IMR-90 (cell line): ENCODE measurements at regions of chr19 and their contacts with region 1.

Region 1: GRCh38 chr19:11035441-11036377 is 53.6 kb upstream of the LDLR start:
- DNase-seq: peak; percentile 74
- ATAC-seq: peak; percentile 97
- H3K4me3 ChIP-seq: no peak overlapping the region
- H3K27ac ChIP-seq: no peak overlapping the region
- H3K4me1 ChIP-seq: no peaks in the 10 kb centered on the region
- H3K27me3 ChIP-seq: no peaks in the 10 kb centered on the region
- CTCF ChIP-seq: peak; percentile 77
- POLR2A ChIP-seq: no peak
- RAD21 ChIP-seq: peak; percentile 80

Region 2: DNA sequence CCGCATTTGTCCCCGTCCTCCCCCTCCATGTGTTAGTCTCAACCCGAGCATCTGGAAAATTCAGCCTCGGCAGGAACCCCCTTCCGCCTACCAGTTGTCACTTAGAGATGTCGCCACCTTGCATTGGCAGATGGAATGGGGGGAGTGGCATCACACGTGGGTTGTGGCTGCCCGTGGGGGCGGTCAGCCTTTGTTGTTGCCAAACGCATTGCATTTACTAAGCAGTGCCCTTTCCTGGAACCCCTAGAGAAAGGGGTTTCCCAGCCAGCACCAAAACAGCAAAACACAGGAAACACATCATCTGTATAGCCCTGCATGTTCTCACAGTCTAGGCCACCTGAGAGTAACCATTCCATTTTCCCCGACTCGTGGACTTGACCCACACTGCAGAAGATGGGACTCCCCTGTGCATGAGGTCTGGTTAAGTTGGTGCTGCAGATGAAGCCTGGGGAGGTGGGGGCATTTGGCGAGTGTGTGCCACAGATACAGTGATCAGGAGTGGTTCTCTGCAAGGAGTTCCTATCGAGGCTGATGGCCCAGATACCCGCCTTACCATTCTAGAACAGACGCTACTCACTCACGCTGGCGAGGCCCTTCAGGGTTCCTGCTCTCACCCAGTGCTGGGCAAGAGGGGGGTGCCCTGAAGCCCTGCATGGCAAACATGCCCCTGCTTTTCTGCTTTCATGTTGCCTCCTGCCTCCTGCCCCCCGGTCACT is 238.0 kb before region 1 on chr19:
- CTCF ChIA-PET with region 1: no interaction called
- POLR2A ChIA-PET with region 1: no interaction called
- dilution Hi-C with region 1: no loop called
- in situ Hi-C with region 1: no loop called
- intact Hi-C with region 1: no loop called
- DNase-seq: no peak
- ATAC-seq: no peak
- H3K4me3 ChIP-seq: no peak overlapping the region
- H3K27ac ChIP-seq: no peak overlapping the region
- H3K4me1 ChIP-seq: no peaks in the 10 kb centered on the region; the same call in 1 of the 2 replicates
- H3K27me3 ChIP-seq: no peaks in the 10 kb centered on the region
- CTCF ChIP-seq: no peak
- POLR2A ChIP-seq: no peak
- RAD21 ChIP-seq: no peak

Region 3: GRCh38 chr19:10998045-10998533 is 37.6 kb before region 1 on chr19:
- CTCF ChIA-PET with region 1: no interaction called
- POLR2A ChIA-PET with region 1: no interaction called
- dilution Hi-C with region 1: no loop called
- in situ Hi-C with region 1: no loop called
- intact Hi-C with region 1: no loop called
- DNase-seq: peak; percentile 29
- ATAC-seq: peak; percentile 57
- H3K4me3 ChIP-seq: no peak overlapping the region
- H3K27ac ChIP-seq: no peak overlapping the region
- H3K4me1 ChIP-seq: peaks cover 1% of the 10 kb centered on the region; the same call in 1 of the 2 replicates
- H3K27me3 ChIP-seq: no peaks in the 10 kb centered on the region
- CTCF ChIP-seq: no peak
- POLR2A ChIP-seq: no peak
- RAD21 ChIP-seq: no peak

Region 4: GRCh38 chr19:11089254-11090053 is 53.7 kb after region 1 on chr19 and contains the start of gene LDLR:
- CTCF ChIA-PET with region 1: interaction called, 4 read pairs
- POLR2A ChIA-PET with region 1: no interaction called
- dilution Hi-C with region 1: no loop called
- in situ Hi-C with region 1: no loop called
- intact Hi-C with region 1: loop called (anchors 1 kb)
- DNase-seq: peak; percentile 90
- ATAC-seq: peak; percentile 38
- H3K4me3 ChIP-seq: peak within 1 kb of the TSS; percentile 54
- H3K27ac ChIP-seq: peak within 1 kb of the TSS; percentile 78
- H3K4me1 ChIP-seq: peaks cover 8% of the 10 kb centered on the region
- H3K27me3 ChIP-seq: no peaks in the 10 kb centered on the region
- CTCF ChIP-seq: no peak
- POLR2A ChIP-seq: peak; percentile 96
- RAD21 ChIP-seq: no peak
- total RNA-seq, gene LDLR: 40.5 and 45.2 TPM in 2 replicates

Region 5: GRCh38 chr19:11125994-11126685 is 90.4 kb after region 1 on chr19:
- CTCF ChIA-PET with region 1: no interaction called
- POLR2A ChIA-PET with region 1: no interaction called
- dilution Hi-C with region 1: no loop called
- in situ Hi-C with region 1: loop called (anchors 5 kb)
- intact Hi-C with region 1: loop called (anchors 2 kb)
- DNase-seq: peak; percentile 64
- ATAC-seq: peak; percentile 40; the same call in 1 of the 2 replicates
- H3K4me3 ChIP-seq: no peak overlapping the region
- H3K27ac ChIP-seq: no peak overlapping the region
- H3K4me1 ChIP-seq: peaks cover 2% of the 10 kb centered on the region; the same call in 1 of the 2 replicates
- H3K27me3 ChIP-seq: no peaks in the 10 kb centered on the region
- CTCF ChIP-seq: peak; percentile 69
- POLR2A ChIP-seq: no peak
- RAD21 ChIP-seq: peak; percentile 63

Region 6: GRCh38 chr19:11203194-11204075 is 167.7 kb after region 1 on chr19:
- CTCF ChIA-PET with region 1: no interaction called
- POLR2A ChIA-PET with region 1: no interaction called
- dilution Hi-C with region 1: no loop called
- in situ Hi-C with region 1: loop called (anchors 10 kb)
- intact Hi-C with region 1: loop called (anchors 1 kb)
- DNase-seq: peak; percentile 71
- ATAC-seq: peak; percentile 80
- H3K4me3 ChIP-seq: no peak overlapping the region
- H3K27ac ChIP-seq: peak overlapping the region; percentile 89
- H3K4me1 ChIP-seq: peaks cover 13% of the 10 kb centered on the region
- H3K27me3 ChIP-seq: no peaks in the 10 kb centered on the region
- CTCF ChIP-seq: peak; percentile 84
- POLR2A ChIP-seq: no peak
- RAD21 ChIP-seq: peak; percentile 86